ENCODE measurements at regions of chr15 and their contacts with region 1.

Region 1: GRCh38 chr15:92683232-92683834 is 27.8 kb upstream of the FAM174B start:
- DNase-seq: peak; percentile 35
- H3K4me3 ChIP-seq: no peak overlapping the region
- H3K27ac ChIP-seq: no peak overlapping the region
- H3K4me1 ChIP-seq: no peaks in the 10 kb centered on the region
- H3K27me3 ChIP-seq: no peaks in the 10 kb centered on the region
- CTCF ChIP-seq: no peak

Region 2: DNA sequence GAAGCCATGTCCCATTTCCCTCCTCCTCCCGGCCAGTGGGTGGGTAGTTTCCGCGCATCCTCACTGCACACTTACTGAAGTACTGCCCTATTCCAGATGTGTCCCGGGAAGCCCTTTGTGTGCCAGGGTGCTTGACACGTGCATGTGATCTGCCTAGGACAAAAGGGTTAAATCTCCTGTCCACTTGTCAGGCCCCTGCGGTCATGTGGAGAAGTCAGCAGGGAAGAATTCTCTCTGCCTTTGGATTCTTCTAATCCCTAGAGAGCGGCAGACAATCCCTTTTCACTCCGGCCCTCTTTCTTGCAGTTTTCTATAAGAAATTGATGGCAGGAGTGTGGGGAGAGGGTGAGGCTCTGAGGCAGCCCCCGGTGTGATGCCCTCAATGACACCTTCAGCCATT is 269.8 kb before region 1 on chr15:
- intact Hi-C with region 1: no loop called
- DNase-seq: no peak
- H3K4me3 ChIP-seq: no peak overlapping the region
- H3K27ac ChIP-seq: no peak overlapping the region
- H3K4me1 ChIP-seq: no peaks in the 10 kb centered on the region
- H3K27me3 ChIP-seq: no peaks in the 10 kb centered on the region
- CTCF ChIP-seq: no peak

Region 3: DNA sequence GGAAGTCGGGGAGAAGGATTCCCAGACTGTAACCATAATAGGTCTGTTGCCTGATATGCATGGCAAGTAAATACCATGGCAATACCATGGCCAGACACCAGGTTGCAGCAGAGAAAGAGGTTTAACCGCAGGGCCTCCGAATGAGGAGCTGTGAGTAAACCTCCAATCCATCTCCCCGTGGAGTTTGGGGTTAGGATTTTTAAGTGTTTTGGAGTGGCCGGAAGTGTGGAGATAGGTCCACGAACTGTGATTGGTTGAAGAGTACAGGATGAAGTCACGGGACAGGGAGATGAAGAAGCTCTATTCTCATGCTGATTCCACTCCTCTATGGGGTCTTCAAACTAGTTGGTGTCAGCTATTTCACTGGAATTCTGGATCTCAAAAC is 161.7 kb before region 1 on chr15:
- intact Hi-C with region 1: loop called (anchors 5 kb)
- DNase-seq: peak; percentile 75
- H3K4me3 ChIP-seq: no peak overlapping the region
- H3K27ac ChIP-seq: no peak overlapping the region
- H3K4me1 ChIP-seq: no peaks in the 10 kb centered on the region
- H3K27me3 ChIP-seq: no peaks in the 10 kb centered on the region
- CTCF ChIP-seq: peak; percentile 62

Region 4: DNA sequence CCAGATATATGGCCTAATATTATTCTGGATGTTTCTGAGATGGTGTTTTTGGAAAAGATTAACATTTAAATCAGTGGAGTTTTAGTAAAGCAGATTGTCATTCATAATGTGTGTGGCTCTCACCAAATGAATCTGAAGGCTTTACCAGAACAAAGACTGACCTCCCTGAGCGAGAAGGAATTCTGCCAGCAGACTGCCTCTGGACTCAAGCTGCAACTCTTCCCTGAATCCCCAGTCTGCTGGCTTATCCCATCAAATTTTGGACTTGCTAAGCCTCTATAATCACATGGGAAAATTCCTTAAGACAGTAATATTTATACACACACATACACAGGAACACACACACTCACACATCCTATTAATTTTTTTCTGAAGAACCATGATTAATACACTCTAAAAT is 130.0 kb before region 1 on chr15:
- intact Hi-C with region 1: no loop called
- DNase-seq: no peak
- H3K4me3 ChIP-seq: no peak overlapping the region
- H3K27ac ChIP-seq: no peak overlapping the region
- H3K4me1 ChIP-seq: no peaks in the 10 kb centered on the region
- H3K27me3 ChIP-seq: no peaks in the 10 kb centered on the region
- CTCF ChIP-seq: no peak

Region 5: GRCh38 chr15:92565351-92566125 is 117.8 kb before region 1 on chr15:
- intact Hi-C with region 1: no loop called
- DNase-seq: no peak
- H3K4me3 ChIP-seq: no peak overlapping the region
- H3K27ac ChIP-seq: no peak overlapping the region
- H3K4me1 ChIP-seq: no peaks in the 10 kb centered on the region
- H3K27me3 ChIP-seq: no peaks in the 10 kb centered on the region
- CTCF ChIP-seq: no peak

Measured in colonic mucosa (tissue), 4 donors.